ENCODE measurements at regions of chr15 and their contacts with region 1.

Region 1: GRCh38 chr15:101008158-101009139 is 89.3 kb downstream of the LRRK1 start:
- DNase-seq: peak; percentile 61 to 99
- H3K4me3 ChIP-seq: peak overlapping the region; percentile 32 to 61 (median 54)
- H3K27ac ChIP-seq: no peak overlapping the region
- H3K4me1 ChIP-seq: peaks cover 0 to 4% (median 0%) of the 10 kb centered on the region in 4 experiments; a peak in 2 of 7 replicates
- H3K27me3 ChIP-seq: peaks cover 0 to 6% (median 0%) of the 10 kb centered on the region in 4 experiments; a peak in 3 of 7 replicates
- CTCF ChIP-seq: peak; percentile 96 to 98 (median 97)
- EP300 ChIP-seq: no peak
- POLR2A ChIP-seq: no peak
- RAD21 ChIP-seq: peak; percentile 48 to 67

Region 2: GRCh38 chr15:100766243-100767000 is 242.0 kb before region 1 on chr15:
- CTCF ChIA-PET with region 1: no interaction called
- POLR2A ChIA-PET with region 1: no interaction called
- DNase-seq: no peak
- H3K4me3 ChIP-seq: no peak overlapping the region
- H3K27ac ChIP-seq: no peak overlapping the region
- H3K4me1 ChIP-seq: peaks cover 0 to 6% (median 0%) of the 10 kb centered on the region in 4 experiments; a peak in 2 of 7 replicates
- H3K27me3 ChIP-seq: no peaks in the 10 kb centered on the region
- CTCF ChIP-seq: no peak
- EP300 ChIP-seq: no peak
- POLR2A ChIP-seq: no peak
- RAD21 ChIP-seq: no peak

Region 3: DNA sequence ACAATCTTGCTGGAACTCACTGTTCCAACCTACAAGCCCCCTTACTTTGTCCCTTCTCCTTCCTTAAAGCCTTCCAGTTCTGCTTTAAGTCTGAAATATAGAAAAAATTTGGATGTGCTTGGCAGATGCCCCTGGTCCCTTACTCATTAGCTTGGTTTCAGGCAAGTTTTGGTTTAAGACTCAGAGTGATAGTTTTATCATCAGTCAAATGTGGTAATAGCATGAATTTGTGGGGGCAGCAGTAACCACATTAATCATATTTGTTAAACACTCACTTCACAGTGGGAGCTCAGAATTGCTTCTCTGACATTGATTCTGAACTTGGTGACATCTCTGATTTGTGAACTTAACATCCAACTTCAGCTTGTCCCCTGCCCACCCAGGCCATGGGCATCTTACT is 187.1 kb before region 1 on chr15:
- CTCF ChIA-PET with region 1: no interaction called
- POLR2A ChIA-PET with region 1: no interaction called
- DNase-seq: no peak
- H3K4me3 ChIP-seq: no peak overlapping the region
- H3K27ac ChIP-seq: no peak overlapping the region
- H3K4me1 ChIP-seq: no peaks in the 10 kb centered on the region
- H3K27me3 ChIP-seq: no peaks in the 10 kb centered on the region
- CTCF ChIP-seq: no peak
- EP300 ChIP-seq: no peak
- POLR2A ChIP-seq: no peak
- RAD21 ChIP-seq: no peak

Region 4: GRCh38 chr15:100833417-100834389 is 174.7 kb before region 1 on chr15:
- CTCF ChIA-PET with region 1: no interaction called
- POLR2A ChIA-PET with region 1: no interaction called
- DNase-seq: no peak
- H3K4me3 ChIP-seq: no peak overlapping the region
- H3K27ac ChIP-seq: no peak overlapping the region
- H3K4me1 ChIP-seq: no peaks in the 10 kb centered on the region
- H3K27me3 ChIP-seq: no peaks in the 10 kb centered on the region
- CTCF ChIP-seq: no peak
- EP300 ChIP-seq: no peak
- POLR2A ChIP-seq: no peak
- RAD21 ChIP-seq: no peak

Region 5: GRCh38 chr15:100889385-100890050 is 118.9 kb before region 1 on chr15:
- CTCF ChIA-PET with region 1: interaction called, 34 read pairs
- POLR2A ChIA-PET with region 1: no interaction called
- DNase-seq: no peak
- H3K4me3 ChIP-seq: no peak overlapping the region
- H3K27ac ChIP-seq: no peak overlapping the region
- H3K4me1 ChIP-seq: peaks cover 0 to 7% (median 2%) of the 10 kb centered on the region in 4 experiments; a peak in 2 of 7 replicates
- H3K27me3 ChIP-seq: no peaks in the 10 kb centered on the region; a peak in 1 of 7 replicates
- CTCF ChIP-seq: no peak
- EP300 ChIP-seq: no peak
- POLR2A ChIP-seq: no peak
- RAD21 ChIP-seq: no peak

Region 6: DNA sequence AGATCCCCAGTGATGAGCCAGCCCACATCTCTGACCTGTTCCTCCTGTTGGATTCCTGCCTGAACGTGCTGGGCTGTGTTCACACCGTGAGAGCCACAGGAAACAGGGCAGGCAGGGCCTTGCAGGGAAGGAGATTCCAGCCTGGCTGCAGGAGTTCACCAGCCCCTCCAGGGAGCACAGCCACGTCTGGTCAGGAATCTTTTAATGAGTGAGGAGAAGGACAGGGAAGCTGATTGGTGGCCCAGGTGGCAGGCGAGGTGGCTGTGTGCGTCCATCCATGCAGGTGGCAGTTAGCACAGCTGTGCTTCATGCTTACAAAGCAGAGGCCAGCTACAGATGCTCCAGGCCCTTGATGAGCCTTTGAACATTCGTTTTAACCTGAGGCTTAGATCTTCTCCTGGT is 78.8 kb before region 1 on chr15:
- CTCF ChIA-PET with region 1: interaction called, 405 read pairs
- POLR2A ChIA-PET with region 1: no interaction called
- DNase-seq: no peak
- H3K4me3 ChIP-seq: no peak overlapping the region
- H3K27ac ChIP-seq: no peak overlapping the region
- H3K4me1 ChIP-seq: peaks cover 0 to 12% (median 6%) of the 10 kb centered on the region in 4 experiments; a peak in 5 of 7 replicates
- H3K27me3 ChIP-seq: peaks cover 0 to 1% (median 0%) of the 10 kb centered on the region in 4 experiments; a peak in 1 of 7 replicates
- CTCF ChIP-seq: no peak
- EP300 ChIP-seq: no peak
- POLR2A ChIP-seq: no peak
- RAD21 ChIP-seq: no peak

Region 7: GRCh38 chr15:100994597-100995446 is 13.6 kb before region 1 on chr15:
- CTCF ChIA-PET with region 1: interaction called, 20 read pairs
- POLR2A ChIA-PET with region 1: no interaction called
- DNase-seq: no peak
- H3K4me3 ChIP-seq: no peak overlapping the region
- H3K27ac ChIP-seq: no peak overlapping the region
- H3K4me1 ChIP-seq: no peaks in the 10 kb centered on the region
- H3K27me3 ChIP-seq: no peaks in the 10 kb centered on the region
- CTCF ChIP-seq: no peak
- EP300 ChIP-seq: no peak
- POLR2A ChIP-seq: no peak
- RAD21 ChIP-seq: no peak

Region 8: DNA sequence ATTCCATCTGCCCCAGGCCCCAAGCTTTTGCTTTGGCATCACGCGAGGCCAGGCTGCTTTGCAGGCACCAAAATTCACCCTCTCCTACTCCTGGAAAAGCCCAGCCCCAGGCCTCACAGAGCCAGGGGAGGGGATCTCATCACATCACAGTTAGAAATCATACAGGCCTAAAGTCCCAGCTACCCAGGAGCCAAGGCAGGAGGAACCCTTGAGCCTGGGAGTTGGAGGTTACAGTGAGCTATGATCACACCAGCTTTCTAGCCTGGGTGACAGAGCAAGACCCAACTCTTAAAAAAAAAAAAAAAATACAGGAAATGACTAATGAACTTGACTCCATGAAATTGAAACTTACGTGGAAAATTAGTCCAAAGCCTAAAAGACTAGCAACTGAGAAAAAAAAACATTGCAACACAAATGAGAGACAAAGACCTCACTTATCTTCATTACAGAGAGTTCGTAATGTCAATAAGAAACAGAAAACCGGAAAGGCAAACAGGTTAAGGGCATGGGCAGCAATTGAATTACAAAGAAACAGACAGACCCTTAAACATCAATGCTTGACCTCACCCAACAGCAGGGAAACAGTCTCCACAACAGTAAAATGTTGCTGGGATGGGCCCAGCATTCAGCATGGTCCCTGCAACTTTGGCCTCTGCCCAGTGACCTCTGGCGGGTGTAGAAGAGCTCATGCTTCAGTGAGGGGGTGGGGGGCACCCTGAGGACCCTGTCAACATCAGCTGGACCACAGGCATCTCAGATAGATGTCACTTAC is 62.2 kb after region 1 on chr15:
- CTCF ChIA-PET with region 1: interaction called, 16 read pairs
- POLR2A ChIA-PET with region 1: interaction called, 3 read pairs
- DNase-seq: no peak
- H3K4me3 ChIP-seq: no peak overlapping the region
- H3K27ac ChIP-seq: peak overlapping the region; percentile 92
- H3K4me1 ChIP-seq: peaks cover 22 to 39% (median 30%) of the 10 kb centered on the region in 4 experiments
- H3K27me3 ChIP-seq: no peaks in the 10 kb centered on the region
- CTCF ChIP-seq: no peak
- EP300 ChIP-seq: no peak
- POLR2A ChIP-seq: no peak
- RAD21 ChIP-seq: no peak

Region 9: DNA sequence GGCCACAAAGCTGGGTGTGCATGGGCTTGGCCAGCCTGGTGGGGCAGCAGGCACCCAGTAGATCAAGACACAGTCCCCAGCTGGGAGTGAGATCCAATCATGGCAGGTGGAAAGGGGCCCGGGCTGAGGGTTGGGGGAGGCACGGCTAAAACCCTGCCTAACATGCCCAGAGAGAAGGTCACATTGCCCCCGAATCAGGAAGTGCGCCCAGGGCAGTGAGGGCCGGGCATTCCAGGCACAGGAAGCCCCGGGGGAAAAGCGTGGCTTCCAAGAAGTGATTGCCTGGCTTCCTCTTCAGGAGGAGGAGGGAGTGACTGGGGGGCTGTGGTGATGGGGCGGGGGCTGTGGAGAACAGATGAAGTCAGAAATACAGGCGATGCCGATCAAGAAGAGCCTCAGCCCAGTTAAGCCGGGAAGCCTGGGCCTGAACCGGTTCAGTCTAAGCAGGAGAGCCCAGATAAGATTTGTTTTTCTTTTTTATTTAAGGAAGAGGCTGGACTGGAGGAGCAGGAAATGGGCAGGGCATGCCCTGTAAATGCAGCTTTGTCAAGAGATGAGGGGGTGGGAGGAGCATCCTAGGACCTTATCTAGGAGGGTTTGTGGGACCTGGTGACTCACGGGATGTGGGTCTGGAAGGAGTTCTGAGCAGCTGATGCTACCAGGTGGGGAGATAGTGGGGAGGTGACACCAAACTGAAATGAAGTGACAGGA is 159.5 kb after region 1 on chr15:
- CTCF ChIA-PET with region 1: interaction called, 11 read pairs
- POLR2A ChIA-PET with region 1: no interaction called
- DNase-seq: no peak
- H3K4me3 ChIP-seq: no peak overlapping the region
- H3K27ac ChIP-seq: no peak overlapping the region
- H3K4me1 ChIP-seq: peaks cover 0 to 8% (median 0%) of the 10 kb centered on the region in 4 experiments; a peak in 3 of 7 replicates
- H3K27me3 ChIP-seq: no peaks in the 10 kb centered on the region
- CTCF ChIP-seq: no peak
- EP300 ChIP-seq: no peak
- POLR2A ChIP-seq: no peak
- RAD21 ChIP-seq: no peak

Measured in H1 (cell line).